Endothelial cell of umbilical vein (primary cell): ENCODE measurements at regions of chr20 and their contacts with region 1.

Region 1: GRCh38 chr20:15703171-15703911 is 869.9 kb downstream of the KIF16B start:
- DNase-seq: peak; percentile 85
- H3K4me3 ChIP-seq: no peak overlapping the region
- H3K27ac ChIP-seq: peak overlapping the region; percentile 39
- H3K4me1 ChIP-seq: peaks cover 24% of the 10 kb centered on the region
- H3K27me3 ChIP-seq: no peaks in the 10 kb centered on the region
- CTCF ChIP-seq: no peak
- POLR2A ChIP-seq: peak; percentile 55

Region 2: DNA sequence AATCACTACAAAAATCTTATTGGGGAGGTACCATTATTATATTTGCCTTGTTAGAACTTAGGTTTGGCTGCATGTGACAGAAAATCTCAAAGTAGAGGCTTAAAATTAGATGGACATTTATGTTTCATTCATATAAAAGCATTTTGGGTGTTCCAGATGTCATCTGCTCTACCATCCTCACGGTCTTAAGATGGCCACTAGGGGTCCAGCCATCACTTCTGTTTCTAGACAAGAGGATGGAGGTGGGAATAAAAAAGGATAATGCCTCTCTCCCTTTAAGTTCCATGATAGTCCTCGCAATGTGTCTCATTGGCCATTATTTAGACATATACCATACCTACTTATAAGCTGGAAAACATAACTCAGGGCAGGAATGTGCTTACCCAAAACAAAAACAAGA is 59.6 kb before region 1 on chr20:
- CTCF ChIA-PET with region 1: no interaction called
- POLR2A ChIA-PET with region 1: no interaction called
- dilution Hi-C with region 1: no loop called
- intact Hi-C with region 1: loop called (anchors 5 kb)
- DNase-seq: peak; percentile 15
- H3K4me3 ChIP-seq: no peak overlapping the region
- H3K27ac ChIP-seq: no peak overlapping the region
- H3K4me1 ChIP-seq: peaks cover 5% of the 10 kb centered on the region
- H3K27me3 ChIP-seq: peaks cover 0 to 2% of the 10 kb centered on the region in 2 experiments
- CTCF ChIP-seq: peak; percentile 22 to 39
- POLR2A ChIP-seq: no peak

Region 3: GRCh38 chr20:15673206-15673605 is 30.1 kb before region 1 on chr20:
- CTCF ChIA-PET with region 1: no interaction called
- POLR2A ChIA-PET with region 1: no interaction called
- dilution Hi-C with region 1: no loop called
- intact Hi-C with region 1: loop called (anchors 2 kb)
- DNase-seq: peak; percentile 76
- H3K4me3 ChIP-seq: no peak overlapping the region
- H3K27ac ChIP-seq: peak overlapping the region; percentile 51
- H3K4me1 ChIP-seq: peaks cover 13% of the 10 kb centered on the region
- H3K27me3 ChIP-seq: no peaks in the 10 kb centered on the region
- CTCF ChIP-seq: no peak
- POLR2A ChIP-seq: no peak

Region 4: GRCh38 chr20:15767586-15767985 is 64.2 kb after region 1 on chr20:
- CTCF ChIA-PET with region 1: no interaction called
- POLR2A ChIA-PET with region 1: no interaction called
- dilution Hi-C with region 1: no loop called
- intact Hi-C with region 1: no loop called
- DNase-seq: no peak
- H3K4me3 ChIP-seq: no peak overlapping the region
- H3K27ac ChIP-seq: no peak overlapping the region
- H3K4me1 ChIP-seq: no peaks in the 10 kb centered on the region
- H3K27me3 ChIP-seq: no peaks in the 10 kb centered on the region
- CTCF ChIP-seq: no peak
- POLR2A ChIP-seq: no peak